ENCODE measurements at regions of chr9 and their contacts with region 1.

Region 1: GRCh38 chr9:94993064-94993833 is 266.8 kb downstream of the AOPEP start:
- DNase-seq: no peak
- H3K4me3 ChIP-seq: no peak overlapping the region
- H3K27ac ChIP-seq: peak overlapping the region in 1 of 4 donors; percentile 8
- H3K4me1 ChIP-seq: peaks cover 23 to 33% (median 30%) of the 10 kb centered on the region in 4 donors
- H3K27me3 ChIP-seq: no peaks in the 10 kb centered on the region
- CTCF ChIP-seq: no peak
- EP300 ChIP-seq: no peak
- POLR2A ChIP-seq: no peak

Region 2: DNA sequence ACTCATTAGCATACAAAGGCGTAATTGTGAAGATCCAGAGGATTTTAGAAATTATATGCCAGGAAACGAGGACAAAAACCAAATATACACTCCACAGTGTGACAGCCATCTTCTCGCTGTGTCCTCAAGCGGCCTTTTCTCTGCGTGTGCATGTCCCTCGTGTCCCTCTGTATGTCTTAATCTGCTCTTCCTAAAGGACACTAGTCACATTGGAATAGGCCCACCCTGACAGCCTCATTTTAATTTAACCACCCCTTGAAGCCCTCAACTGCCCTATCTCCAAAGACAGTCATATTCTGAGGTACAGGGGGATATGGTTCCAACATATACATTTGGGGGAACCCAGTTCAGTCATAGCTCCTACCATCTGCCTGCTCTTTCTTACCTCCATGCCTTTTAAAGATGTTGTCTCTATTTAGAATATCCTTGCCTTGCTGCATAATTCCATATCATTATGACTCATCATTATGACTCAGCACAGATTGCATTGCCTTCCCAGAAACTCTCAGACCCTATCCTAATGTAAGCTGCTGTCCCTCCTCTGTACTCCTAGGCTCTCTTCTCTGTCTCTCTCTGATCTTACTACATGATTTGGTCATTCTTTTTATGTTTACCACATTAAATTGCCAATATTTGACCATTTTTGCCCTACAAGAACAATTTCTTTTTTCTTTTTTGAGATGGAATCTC is 55.9 kb before region 1 on chr9:
- intact Hi-C with region 1: loop called (anchors 5 kb)
- DNase-seq: no peak
- H3K4me3 ChIP-seq: no peak overlapping the region
- H3K27ac ChIP-seq: peak overlapping the region in 3 of 4 donors; percentile 7 to 26 (median 12)
- H3K4me1 ChIP-seq: peaks cover 22 to 47% (median 35%) of the 10 kb centered on the region in 4 donors
- H3K27me3 ChIP-seq: no peaks in the 10 kb centered on the region
- CTCF ChIP-seq: no peak
- EP300 ChIP-seq: no peak
- POLR2A ChIP-seq: no peak

Measured in esophagus muscularis mucosa (tissue), 4 donors.